IMR-90 (cell line): ENCODE measurements at regions of chr6 and their contacts with region 1.

Region 1: GRCh38 chr6:166638573-166638964 is 11.5 kb upstream of the RPS6KA2 start:
- DNase-seq: no peak
- ATAC-seq: no peak
- H3K4me3 ChIP-seq: no peak overlapping the region
- H3K27ac ChIP-seq: no peak overlapping the region
- H3K4me1 ChIP-seq: no peaks in the 10 kb centered on the region
- H3K27me3 ChIP-seq: peaks cover 13% of the 10 kb centered on the region; the same call in 1 of the 2 replicates
- CTCF ChIP-seq: no peak
- POLR2A ChIP-seq: no peak
- RAD21 ChIP-seq: no peak

Region 2: GRCh38 chr6:166411721-166412151 is 226.8 kb before region 1 on chr6:
- CTCF ChIA-PET with region 1: no interaction called
- POLR2A ChIA-PET with region 1: interaction called, 19 read pairs
- dilution Hi-C with region 1: no loop called
- in situ Hi-C with region 1: no loop called
- intact Hi-C with region 1: no loop called
- DNase-seq: no peak
- ATAC-seq: no peak
- H3K4me3 ChIP-seq: no peak overlapping the region
- H3K27ac ChIP-seq: no peak overlapping the region
- H3K4me1 ChIP-seq: no peaks in the 10 kb centered on the region
- H3K27me3 ChIP-seq: no peaks in the 10 kb centered on the region
- CTCF ChIP-seq: no peak
- POLR2A ChIP-seq: no peak
- RAD21 ChIP-seq: no peak